Activated CD4-positive, alpha-beta memory T cell treated with anti-CD3 and anti-CD28 coated beads, Interleukin-2, amount 10 ng/mL, durations not matched to agents 7 days and 5 days (primary cell): ENCODE measurements at regions of chr12 and their contacts with region 1.

Region 1: GRCh38 chr12:89352492-89353187 is at the start of gene DUSP6:
- DNase-seq: peak; percentile 98
- H3K4me3 Mint-ChIP-seq: peak within 1 kb of the TSS; percentile 98
- H3K27ac Mint-ChIP-seq: peak within 1 kb of the TSS; percentile 96
- H3K4me1 Mint-ChIP-seq: peaks cover 45% of the 10 kb centered on the region
- H3K27me3 Mint-ChIP-seq: no peaks in the 10 kb centered on the region
- total RNA-seq, gene DUSP6: 170 to 171 TPM

Region 2: DNA sequence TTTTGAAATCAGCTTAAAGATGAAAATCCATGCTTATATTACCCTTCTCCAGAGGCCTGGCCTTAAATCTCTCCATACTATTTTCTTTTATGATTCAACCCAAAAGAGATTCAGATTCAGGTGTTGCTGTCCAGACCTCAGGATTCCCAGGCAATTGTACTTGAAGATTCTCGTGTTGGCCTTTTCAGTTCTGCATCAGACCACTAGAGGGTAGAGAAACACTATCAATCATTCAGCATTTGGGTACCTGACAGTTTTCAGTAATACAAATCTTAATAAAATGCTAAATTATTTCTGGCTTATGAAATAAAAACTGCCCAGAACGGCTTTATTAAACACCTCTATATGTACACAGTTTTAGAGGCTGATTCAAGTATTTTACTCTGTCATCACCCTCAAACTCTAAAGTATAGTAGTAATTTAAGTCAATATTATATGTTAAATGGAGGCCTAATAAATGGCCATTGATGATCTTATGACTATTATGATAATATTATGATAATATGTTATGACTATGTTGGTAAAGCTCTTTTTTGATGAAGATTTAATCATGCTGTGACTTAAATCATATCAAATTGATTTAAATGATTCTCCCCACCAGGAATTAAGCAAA is 301.5 kb before region 1 on chr12:
- CTCF ChIA-PET with region 1: interaction called, 12 read pairs
- POLR2A ChIA-PET with region 1: interaction called, 10 read pairs
- DNase-seq: no peak
- H3K4me3 Mint-ChIP-seq: no peak overlapping the region
- H3K27ac Mint-ChIP-seq: no peak overlapping the region
- H3K4me1 Mint-ChIP-seq: peaks cover 25% of the 10 kb centered on the region
- H3K27me3 Mint-ChIP-seq: no peaks in the 10 kb centered on the region

Region 3: GRCh38 chr12:89179983-89180382 is 172.7 kb before region 1 on chr12:
- CTCF ChIA-PET with region 1: interaction called, 12 read pairs
- POLR2A ChIA-PET with region 1: interaction called, 134 read pairs
- DNase-seq: no peak
- H3K4me3 Mint-ChIP-seq: no peak overlapping the region
- H3K27ac Mint-ChIP-seq: peak overlapping the region; percentile 80
- H3K4me1 Mint-ChIP-seq: peaks cover 50% of the 10 kb centered on the region
- H3K27me3 Mint-ChIP-seq: no peaks in the 10 kb centered on the region

Region 4: GRCh38 chr12:89280833-89281538 is 71.7 kb before region 1 on chr12:
- CTCF ChIA-PET with region 1: no interaction called
- POLR2A ChIA-PET with region 1: interaction called, 36 read pairs
- DNase-seq: no peak
- H3K4me3 Mint-ChIP-seq: peak overlapping the region; percentile 52
- H3K27ac Mint-ChIP-seq: peak overlapping the region; percentile 91
- H3K4me1 Mint-ChIP-seq: peaks cover 25% of the 10 kb centered on the region
- H3K27me3 Mint-ChIP-seq: no peaks in the 10 kb centered on the region

Region 5: GRCh38 chr12:89319122-89319521 is 33.5 kb before region 1 on chr12:
- CTCF ChIA-PET with region 1: no interaction called
- POLR2A ChIA-PET with region 1: no interaction called
- DNase-seq: no peak
- H3K4me3 Mint-ChIP-seq: no peak overlapping the region
- H3K27ac Mint-ChIP-seq: no peak overlapping the region
- H3K4me1 Mint-ChIP-seq: peaks cover 6% of the 10 kb centered on the region
- H3K27me3 Mint-ChIP-seq: no peaks in the 10 kb centered on the region

Region 6: DNA sequence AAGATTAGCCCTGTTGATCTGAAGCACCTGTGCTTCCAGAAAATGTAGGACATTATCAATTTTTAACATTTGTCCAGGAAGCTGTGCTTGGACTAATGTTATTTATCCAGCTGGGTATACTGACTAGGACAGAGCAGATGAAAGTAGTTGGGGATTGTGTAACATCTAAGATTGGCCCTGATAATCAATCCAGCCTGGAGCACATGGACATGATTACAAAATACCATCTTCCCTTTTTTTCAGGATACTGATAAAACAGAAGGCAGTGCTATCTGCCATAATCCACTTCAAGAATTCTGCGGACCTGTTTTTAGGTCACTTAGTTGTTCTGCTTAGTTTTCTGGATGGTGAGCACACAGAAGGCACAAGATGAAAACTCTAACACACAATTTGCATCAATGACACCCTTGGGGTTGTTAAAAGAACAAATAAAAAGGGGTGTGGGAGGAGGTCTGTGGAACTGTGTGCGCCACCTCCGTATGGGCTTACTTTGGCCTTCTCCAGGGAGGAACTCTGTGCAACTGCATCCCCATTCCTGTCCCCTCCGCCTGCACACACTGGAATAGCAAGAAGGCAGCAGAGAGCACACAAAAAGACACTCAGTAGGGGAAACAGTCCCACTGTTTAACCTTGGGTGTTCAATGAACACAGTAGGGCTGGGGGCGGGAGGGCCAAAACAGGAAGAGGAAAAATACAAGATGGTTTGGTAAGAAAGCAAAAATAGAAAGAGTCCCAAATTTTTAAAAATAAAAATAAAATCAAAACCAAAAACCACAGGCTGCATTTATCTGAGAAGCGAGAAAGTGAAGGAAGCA is 30.8 kb after region 1 on chr12:
- CTCF ChIA-PET with region 1: no interaction called
- POLR2A ChIA-PET with region 1: interaction called, 12 read pairs
- DNase-seq: no peak
- H3K4me3 Mint-ChIP-seq: no peak overlapping the region
- H3K27ac Mint-ChIP-seq: no peak overlapping the region
- H3K4me1 Mint-ChIP-seq: peaks cover 19% of the 10 kb centered on the region
- H3K27me3 Mint-ChIP-seq: no peaks in the 10 kb centered on the region

Region 7: DNA sequence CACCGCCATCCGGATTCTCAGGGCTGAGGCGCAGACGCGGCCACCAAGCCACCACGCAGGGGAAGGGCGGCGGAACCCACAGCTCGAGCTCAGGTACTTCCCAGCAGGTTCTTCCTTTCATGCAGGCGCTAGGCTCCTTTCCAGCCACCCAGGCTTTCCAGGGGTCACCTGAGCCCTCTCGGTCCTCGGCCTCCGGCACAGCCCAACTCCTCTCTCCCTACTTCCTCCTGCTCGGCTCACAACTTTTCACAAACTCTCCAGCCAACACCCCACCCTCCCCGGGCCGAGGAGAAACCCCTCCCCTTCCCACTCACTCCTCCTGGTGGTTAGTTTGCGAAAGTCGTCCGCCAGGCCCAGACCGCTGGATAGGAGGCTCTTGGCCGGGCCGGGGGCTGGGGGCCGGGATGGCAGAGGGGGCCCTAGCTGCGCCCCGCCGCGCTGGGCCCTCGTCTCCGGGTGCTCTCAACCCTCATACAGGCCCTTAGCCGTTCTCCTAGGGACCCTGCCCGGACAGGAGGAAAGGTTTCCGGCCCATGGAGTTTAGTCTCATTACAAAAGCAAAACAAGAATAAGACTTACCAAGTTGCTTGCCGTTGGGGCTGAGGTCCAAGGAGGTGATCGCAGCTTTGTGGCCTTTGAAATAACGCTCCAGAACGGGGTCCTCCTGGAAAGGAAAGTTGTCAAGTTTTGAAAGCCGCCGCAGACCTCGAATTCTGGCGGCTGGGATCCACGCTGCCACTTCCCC is 172.1 kb after region 1 on chr12 and contains the start of gene GALNT4:
- CTCF ChIA-PET with region 1: interaction called, 8 read pairs
- POLR2A ChIA-PET with region 1: interaction called, 64 read pairs
- DNase-seq: peak; percentile 84
- H3K4me3 Mint-ChIP-seq: peak within 1 kb of the TSS; percentile 90
- H3K27ac Mint-ChIP-seq: peak within 1 kb of the TSS; percentile 94
- H3K4me1 Mint-ChIP-seq: peaks cover 69% of the 10 kb centered on the region
- H3K27me3 Mint-ChIP-seq: no peaks in the 10 kb centered on the region
- total RNA-seq, gene GALNT4: 21.5 to 23.3 TPM